ENCODE measurements at regions of chr18 and their contacts with region 1.

Region 1: DNA sequence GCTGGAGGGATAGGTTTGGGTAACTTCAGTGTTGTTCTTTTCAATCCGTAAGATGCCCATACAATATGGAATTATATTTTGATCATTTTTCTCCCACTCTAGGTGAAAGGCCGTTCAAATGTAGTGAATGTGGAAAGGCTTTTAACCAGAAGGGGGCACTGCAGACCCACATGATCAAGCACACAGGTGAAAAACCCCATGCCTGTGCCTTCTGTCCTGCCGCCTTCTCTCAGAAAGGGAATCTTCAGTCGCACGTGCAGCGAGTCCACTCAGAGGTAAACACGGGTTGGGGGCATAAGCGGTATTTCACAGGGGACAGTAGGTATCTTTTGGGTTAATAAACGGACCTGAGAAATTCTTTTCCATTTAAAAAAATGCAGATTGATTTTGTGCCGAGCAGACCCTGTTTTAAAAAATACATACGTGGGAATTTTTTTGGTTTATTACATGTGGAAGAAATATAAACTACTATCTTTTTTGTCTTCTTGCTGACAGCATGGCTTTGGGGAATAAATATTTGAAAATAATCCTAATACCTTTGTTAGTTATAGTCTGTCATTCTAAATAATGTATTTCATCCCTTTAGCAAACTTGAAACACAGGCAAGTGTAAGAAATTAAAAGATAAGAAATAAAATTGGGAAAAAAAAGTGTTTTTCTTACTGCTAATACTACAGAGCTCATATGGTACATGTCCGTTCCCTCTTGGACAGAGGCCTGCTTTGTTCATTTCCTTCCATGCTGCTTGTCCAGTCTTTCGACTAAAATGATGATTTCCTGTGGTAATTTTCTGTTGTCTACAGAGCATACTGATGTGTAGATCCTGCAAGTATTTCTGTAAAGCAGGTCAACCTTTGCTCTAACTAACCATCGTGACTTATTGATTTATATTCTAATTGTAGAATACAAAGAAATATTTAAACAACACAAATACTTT is 53.3 kb downstream of the ZNF236 start:
- DNase-seq: peak; percentile 61
- ATAC-seq: peak; percentile 53
- H3K4me3 ChIP-seq: no peak overlapping the region
- H3K4me3 Mint-ChIP-seq: no peak overlapping the region
- H3K27ac ChIP-seq: no peak overlapping the region
- H3K27ac Mint-ChIP-seq: no peak overlapping the region
- H3K4me1 ChIP-seq: no peaks in the 10 kb centered on the region
- H3K4me1 Mint-ChIP-seq: no peaks in the 10 kb centered on the region
- H3K27me3 ChIP-seq: no peaks in the 10 kb centered on the region
- H3K27me3 Mint-ChIP-seq: no peaks in the 10 kb centered on the region
- CTCF ChIP-seq: peak; percentile 76

Region 2: GRCh38 chr18:77469131-77469530 is 593.5 kb after region 1 on chr18:
- CTCF ChIA-PET with region 1: no interaction called
- POLR2A ChIA-PET with region 1: no interaction called
- intact Hi-C with region 1: loop called (anchors 5 kb)
- DNase-seq: no peak
- ATAC-seq: no peak
- H3K4me3 ChIP-seq: no peak overlapping the region
- H3K4me3 Mint-ChIP-seq: no peak overlapping the region
- H3K27ac ChIP-seq: no peak overlapping the region
- H3K27ac Mint-ChIP-seq: no peak overlapping the region
- H3K4me1 ChIP-seq: no peaks in the 10 kb centered on the region
- H3K4me1 Mint-ChIP-seq: no peaks in the 10 kb centered on the region
- H3K27me3 ChIP-seq: peaks cover 0 to 3% (median 0%) of the 10 kb centered on the region in 4 experiments
- H3K27me3 Mint-ChIP-seq: peaks cover 20% of the 10 kb centered on the region
- CTCF ChIP-seq: peak; percentile 1

Region 3: DNA sequence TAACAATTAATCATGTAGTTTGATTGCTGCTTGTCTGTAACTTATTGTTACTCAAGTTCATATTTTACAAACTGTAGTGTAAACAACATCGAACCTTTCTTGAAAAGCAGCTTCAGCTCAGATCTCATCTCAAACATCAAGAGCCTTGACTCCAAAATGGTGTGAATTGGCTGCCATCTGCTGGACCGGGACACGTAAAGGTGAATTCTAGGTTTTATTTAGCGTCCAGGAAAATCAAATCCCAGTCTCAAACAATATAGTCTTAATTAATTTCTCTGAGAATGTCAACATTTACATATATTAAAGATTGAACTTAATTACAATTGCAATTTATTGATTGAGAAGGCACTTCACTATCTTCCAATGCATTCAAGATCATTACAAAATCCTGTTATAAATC is 827.0 kb after region 1 on chr18:
- CTCF ChIA-PET with region 1: no interaction called
- POLR2A ChIA-PET with region 1: no interaction called
- intact Hi-C with region 1: loop called (anchors 5 kb)
- DNase-seq: peak; percentile 11
- ATAC-seq: no peak
- H3K4me3 ChIP-seq: no peak overlapping the region
- H3K4me3 Mint-ChIP-seq: no peak overlapping the region
- H3K27ac ChIP-seq: no peak overlapping the region
- H3K27ac Mint-ChIP-seq: no peak overlapping the region
- H3K4me1 ChIP-seq: no peaks in the 10 kb centered on the region
- H3K4me1 Mint-ChIP-seq: no peaks in the 10 kb centered on the region
- H3K27me3 ChIP-seq: no peaks in the 10 kb centered on the region
- H3K27me3 Mint-ChIP-seq: peaks cover 19% of the 10 kb centered on the region
- CTCF ChIP-seq: peak; percentile 29